CD14-positive monocyte (primary cell): ENCODE measurements at regions of chr12 and their contacts with region 1.

Region 1: GRCh38 chr12:65232476-65233077 is 45.9 kb upstream of the MSRB3 start:
- DNase-seq: peak in 2 of 3 donors; percentile 3 to 12
- H3K4me3 ChIP-seq: no peak overlapping the region
- H3K4me3 Mint-ChIP-seq: no peak overlapping the region
- H3K27ac ChIP-seq: no peak overlapping the region
- H3K27ac Mint-ChIP-seq: no peak overlapping the region
- H3K4me1 ChIP-seq: no peaks in the 10 kb centered on the region
- H3K4me1 Mint-ChIP-seq: peaks cover 3% of the 10 kb centered on the region
- H3K27me3 ChIP-seq: no peaks in the 10 kb centered on the region
- H3K27me3 Mint-ChIP-seq: no peaks in the 10 kb centered on the region
- CTCF ChIP-seq: peak; percentile 72

Region 2: DNA sequence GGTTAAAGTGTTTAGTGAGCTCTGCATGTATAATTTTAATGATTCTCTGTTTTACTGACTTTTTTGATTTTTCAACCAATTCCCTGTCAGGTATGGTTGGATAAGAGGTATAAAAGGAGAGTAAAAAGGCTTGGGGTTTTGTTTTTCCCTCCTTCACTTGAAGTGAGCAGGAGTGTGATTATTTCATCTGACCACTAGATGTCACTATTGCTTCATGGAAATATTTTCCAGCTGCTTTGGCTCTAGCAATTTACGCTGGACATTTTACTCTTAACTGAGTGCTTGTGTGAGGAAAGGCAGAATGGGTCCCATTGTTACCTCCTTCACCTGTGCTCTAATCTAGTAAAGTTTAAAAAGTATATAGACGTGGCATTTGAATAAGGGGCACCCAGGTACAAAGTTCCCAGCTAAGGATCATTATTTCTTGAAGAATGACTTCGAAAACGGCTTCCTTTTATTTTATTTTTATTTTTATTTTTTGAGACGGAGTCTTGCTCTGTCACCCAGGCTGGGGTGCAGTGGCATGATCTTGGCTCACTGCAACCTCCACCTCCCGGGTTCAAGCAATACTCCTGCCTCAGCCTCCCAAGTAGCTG is 341.6 kb before region 1 on chr12:
- intact Hi-C with region 1: loop called in 1 of 2 experiments (anchors 5 kb)
- DNase-seq: peak; percentile 25 to 66 (median 41)
- H3K4me3 ChIP-seq: no peak overlapping the region
- H3K4me3 Mint-ChIP-seq: no peak overlapping the region
- H3K27ac ChIP-seq: no peak overlapping the region
- H3K27ac Mint-ChIP-seq: no peak overlapping the region
- H3K4me1 ChIP-seq: no peaks in the 10 kb centered on the region
- H3K4me1 Mint-ChIP-seq: no peaks in the 10 kb centered on the region
- H3K27me3 ChIP-seq: peaks cover 8 to 10% of the 10 kb centered on the region in 2 donors
- H3K27me3 Mint-ChIP-seq: peaks cover 5 to 8% (median 7%) of the 10 kb centered on the region in 3 donors
- CTCF ChIP-seq: peak; percentile 90

Region 3: DNA sequence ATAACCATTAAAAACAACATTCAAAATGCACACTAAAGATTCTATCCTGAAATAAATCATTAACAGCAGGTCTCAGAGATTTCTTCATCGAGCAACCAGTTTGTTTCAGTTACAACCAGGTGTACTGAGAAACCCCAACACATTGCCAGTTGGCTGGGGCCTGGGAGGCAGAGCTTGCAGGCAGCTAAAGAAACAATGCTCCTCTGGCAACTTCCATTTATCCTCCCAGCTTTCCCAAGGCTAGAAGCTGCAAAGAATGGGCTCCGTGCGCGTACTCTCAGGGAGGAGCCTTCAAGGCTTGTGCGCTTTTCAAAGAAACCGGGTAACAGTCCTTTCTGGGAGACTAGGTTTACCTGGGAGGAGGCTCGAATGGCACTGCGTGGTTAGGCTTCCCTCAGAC is 227.5 kb after region 1 on chr12:
- intact Hi-C with region 1: no loop called
- DNase-seq: no peak
- H3K4me3 ChIP-seq: no peak overlapping the region
- H3K4me3 Mint-ChIP-seq: no peak overlapping the region
- H3K27ac ChIP-seq: no peak overlapping the region
- H3K27ac Mint-ChIP-seq: no peak overlapping the region
- H3K4me1 ChIP-seq: no peaks in the 10 kb centered on the region
- H3K4me1 Mint-ChIP-seq: peaks cover 5% of the 10 kb centered on the region
- H3K27me3 ChIP-seq: no peaks in the 10 kb centered on the region
- H3K27me3 Mint-ChIP-seq: no peaks in the 10 kb centered on the region
- CTCF ChIP-seq: no peak